K562 (cell line): ENCODE measurements at regions of chr1 and their contacts with region 1.

Region 1: GRCh38 chr1:68442822-68443556 is 6.8 kb downstream of the RPE65 start:
- DNase-seq: peak; percentile 25 to 39 (median 34)
- ATAC-seq: peak; percentile 85
- H3K4me3 ChIP-seq: no peak overlapping the region
- H3K27ac ChIP-seq: no peak overlapping the region
- H3K4me1 ChIP-seq: no peaks in the 10 kb centered on the region
- H3K27me3 ChIP-seq: no peaks in the 10 kb centered on the region; a peak in 1 of 5 replicates
- CTCF ChIP-seq: peak; percentile 26 to 61 (median 61); a peak in 4 of 6 replicates
- EP300 ChIP-seq: no peak
- POLR2A ChIP-seq: no peak
- RAD21 ChIP-seq: peak in 1 of 2 experiments; percentile 40; a peak in 1 of 4 replicates

Region 2: DNA sequence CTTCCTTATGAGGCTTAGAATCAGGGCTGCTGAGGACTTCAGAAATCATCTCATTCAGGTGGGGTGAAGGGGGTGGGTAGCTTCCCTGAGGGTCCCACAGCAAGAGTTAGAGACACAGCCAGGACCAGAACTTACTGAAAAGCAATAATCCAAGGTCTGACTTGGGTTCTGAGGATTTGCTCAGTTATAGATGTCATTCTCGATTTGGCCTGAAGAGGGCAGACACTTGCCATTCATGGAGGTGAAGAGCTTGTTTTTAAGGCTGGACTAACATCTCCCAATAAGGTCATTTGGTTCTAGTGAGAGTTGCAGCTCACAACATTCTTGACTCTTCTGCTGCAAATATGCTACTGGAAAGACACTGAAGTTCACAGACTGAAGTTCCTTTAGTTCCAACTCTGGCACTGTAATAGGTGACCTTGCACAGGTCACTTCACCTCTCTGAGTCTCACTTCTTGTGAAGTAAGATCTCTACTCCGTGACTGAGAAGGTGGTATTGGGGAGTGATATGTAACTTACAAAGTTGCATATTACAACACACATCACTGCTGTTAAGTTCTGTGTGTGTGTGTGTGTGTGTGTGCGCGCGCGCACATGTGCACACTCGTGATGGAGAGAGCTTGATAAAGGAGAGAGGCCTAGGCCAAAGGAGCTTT is 322.7 kb before region 1 on chr1:
- CTCF ChIA-PET with region 1: interaction called, 3 read pairs
- POLR2A ChIA-PET with region 1: no interaction called
- in situ Hi-C with region 1: no loop called
- intact Hi-C with region 1: loop called (anchors 5 kb)
- DNase-seq: peak; percentile 55 to 70 (median 66)
- ATAC-seq: peak; percentile 85
- H3K4me3 ChIP-seq: no peak overlapping the region
- H3K27ac ChIP-seq: no peak overlapping the region
- H3K4me1 ChIP-seq: no peaks in the 10 kb centered on the region
- H3K27me3 ChIP-seq: 0 out of 5 replicates have a peak, but pooled peaks cover 0 to 4% of the 10 kb centered on the region in 2 experiments
- CTCF ChIP-seq: peak; percentile 63 to 85 (median 80)
- EP300 ChIP-seq: no peak
- POLR2A ChIP-seq: no peak
- RAD21 ChIP-seq: peak; percentile 82 to 88

Region 3: DNA sequence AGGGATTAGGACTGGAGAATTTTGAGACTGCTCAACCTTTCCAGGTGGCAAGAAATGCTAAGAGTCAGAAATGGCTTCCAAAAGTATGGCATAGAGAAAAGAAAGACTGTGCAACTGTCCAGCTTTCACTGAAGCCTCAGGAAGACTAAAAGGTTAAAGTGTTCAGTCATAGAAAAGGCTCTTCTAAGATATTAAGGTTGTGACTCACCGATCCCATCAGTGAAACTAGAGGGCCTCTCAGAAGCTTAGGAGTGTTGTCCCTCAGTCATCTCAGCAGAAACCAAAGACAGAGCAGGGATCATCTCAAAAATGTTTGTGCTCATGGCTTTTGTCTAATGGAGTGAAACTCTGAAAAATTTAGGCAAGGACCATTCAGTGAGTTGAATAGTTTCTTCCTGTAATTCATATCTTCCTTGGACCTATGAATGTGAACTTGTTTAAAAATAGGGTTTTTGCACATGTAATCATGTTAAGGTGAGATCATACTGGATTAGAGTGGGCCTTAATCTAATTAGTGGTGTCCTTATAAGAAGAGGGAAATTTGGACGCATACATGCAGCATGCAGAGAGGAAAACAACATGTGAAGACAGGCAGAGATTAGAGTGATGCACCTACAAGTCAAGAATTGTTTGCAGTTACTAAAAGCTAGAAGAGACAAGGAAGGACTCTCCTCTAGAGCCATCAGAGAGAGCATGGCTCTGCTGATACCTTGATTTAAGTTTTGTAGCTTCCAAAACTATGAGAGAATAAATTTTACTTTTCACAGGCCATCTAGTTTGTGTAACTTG is 64.5 kb before region 1 on chr1:
- CTCF ChIA-PET with region 1: no interaction called
- POLR2A ChIA-PET with region 1: no interaction called
- in situ Hi-C with region 1: no loop called
- intact Hi-C with region 1: no loop called
- DNase-seq: no peak
- ATAC-seq: no peak
- H3K4me3 ChIP-seq: no peak overlapping the region
- H3K27ac ChIP-seq: no peak overlapping the region
- H3K4me1 ChIP-seq: no peaks in the 10 kb centered on the region
- H3K27me3 ChIP-seq: no peaks in the 10 kb centered on the region; a peak in 1 of 5 replicates
- CTCF ChIP-seq: no peak
- EP300 ChIP-seq: no peak
- POLR2A ChIP-seq: no peak
- RAD21 ChIP-seq: no peak

Region 4: DNA sequence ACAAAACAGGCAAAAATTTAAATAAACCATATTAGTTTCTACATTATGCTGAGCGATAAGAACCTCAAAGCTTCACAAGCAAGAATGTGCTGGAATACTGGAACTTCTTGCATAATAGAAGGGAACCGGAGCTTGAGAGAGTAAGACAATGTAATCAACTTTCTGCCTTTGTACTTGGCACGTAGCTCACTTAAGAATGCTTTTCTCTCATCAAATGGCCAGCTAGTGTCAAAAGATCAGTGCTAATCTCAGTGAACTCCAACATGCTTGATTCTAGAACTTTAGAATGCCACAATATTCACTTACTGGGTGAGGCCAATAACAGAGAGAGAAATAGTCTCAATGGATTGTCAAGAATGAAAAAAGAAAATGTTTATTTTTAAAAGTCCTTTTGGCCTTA is 638.7 kb after region 1 on chr1:
- CTCF ChIA-PET with region 1: no interaction called
- POLR2A ChIA-PET with region 1: no interaction called
- in situ Hi-C with region 1: no loop called
- intact Hi-C with region 1: no loop called
- DNase-seq: no peak
- ATAC-seq: no peak
- H3K4me3 ChIP-seq: no peak overlapping the region
- H3K27ac ChIP-seq: no peak overlapping the region
- H3K4me1 ChIP-seq: no peaks in the 10 kb centered on the region
- H3K27me3 ChIP-seq: no peaks in the 10 kb centered on the region
- CTCF ChIP-seq: no peak
- EP300 ChIP-seq: no peak
- POLR2A ChIP-seq: no peak
- RAD21 ChIP-seq: no peak